PC-9 (cell line): ENCODE measurements at regions of chr2 and their contacts with region 1.

Region 1: DNA sequence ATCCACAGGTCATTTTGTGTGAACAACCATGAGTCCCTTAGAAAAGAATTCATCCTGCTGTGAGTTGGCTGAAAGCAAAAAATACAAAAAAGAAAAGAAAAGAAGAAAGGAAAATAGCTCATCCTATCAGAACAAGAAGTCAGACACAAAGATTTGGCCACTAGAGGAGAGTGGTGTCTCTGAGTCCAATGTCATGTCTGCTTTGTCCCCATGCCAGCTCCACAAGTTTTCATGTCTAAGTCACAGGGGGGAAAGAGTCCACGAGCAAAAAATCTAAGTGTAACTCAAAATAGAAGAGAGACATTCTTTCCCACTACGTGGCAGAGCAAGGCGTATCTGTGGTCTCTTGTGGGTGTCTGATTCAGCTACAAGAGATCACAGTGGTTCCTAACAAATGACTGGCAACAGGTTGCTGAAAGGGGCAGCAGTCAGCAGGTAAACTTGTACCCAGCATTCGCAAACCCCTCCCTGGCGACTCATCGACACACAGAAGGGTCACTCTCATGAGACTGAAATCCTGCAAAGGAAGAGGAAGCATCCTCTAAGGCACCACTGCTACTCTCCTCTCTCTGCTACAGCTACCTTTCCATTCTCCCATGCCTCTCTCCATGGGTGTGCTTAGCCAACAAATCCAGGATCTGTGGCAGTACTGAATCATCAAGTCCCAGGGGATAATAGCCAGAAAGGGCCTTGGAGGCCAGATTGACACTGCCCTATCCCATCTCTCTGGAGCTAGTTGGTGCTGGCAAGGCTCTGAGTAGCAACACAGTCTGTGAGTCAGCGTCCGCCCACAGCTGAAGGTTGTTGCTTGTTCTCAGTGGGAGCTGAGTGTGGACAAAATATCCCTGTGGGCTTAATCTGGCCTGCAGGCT is 123.0 kb upstream of the SLC39A10 start:
- DNase-seq: peak; percentile 47 to 61
- H3K4me3 ChIP-seq: no peak overlapping the region
- H3K27ac ChIP-seq: no peak overlapping the region
- H3K4me1 ChIP-seq: no peaks in the 10 kb centered on the region
- H3K27me3 ChIP-seq: no peaks in the 10 kb centered on the region
- CTCF ChIP-seq: no peak

Region 2: GRCh38 chr2:195382186-195382585 is 151.8 kb before region 1 on chr2:
- CTCF ChIA-PET with region 1: no interaction called
- POLR2A ChIA-PET with region 1: no interaction called
- intact Hi-C with region 1: no loop called
- DNase-seq: no peak
- H3K4me3 ChIP-seq: no peak overlapping the region
- H3K27ac ChIP-seq: no peak overlapping the region
- H3K4me1 ChIP-seq: no peaks in the 10 kb centered on the region
- H3K27me3 ChIP-seq: no peaks in the 10 kb centered on the region
- CTCF ChIP-seq: no peak

Region 3: GRCh38 chr2:195612611-195613495 is 78.8 kb after region 1 on chr2:
- CTCF ChIA-PET with region 1: no interaction called
- POLR2A ChIA-PET with region 1: interaction called, 9 read pairs
- intact Hi-C with region 1: loop called (anchors 5 kb)
- DNase-seq: peak; percentile 57 to 80
- H3K4me3 ChIP-seq: peak overlapping the region; percentile 45
- H3K27ac ChIP-seq: peak overlapping the region; percentile 57
- H3K4me1 ChIP-seq: peaks cover 24% of the 10 kb centered on the region
- H3K27me3 ChIP-seq: no peaks in the 10 kb centered on the region
- CTCF ChIP-seq: no peak

Region 4: GRCh38 chr2:195622956-195623355 is 88.9 kb after region 1 on chr2:
- CTCF ChIA-PET with region 1: no interaction called
- POLR2A ChIA-PET with region 1: interaction called, 26 read pairs
- intact Hi-C with region 1: no loop called
- DNase-seq: peak in 1 of 2 experiments; percentile 69
- H3K4me3 ChIP-seq: no peak overlapping the region
- H3K27ac ChIP-seq: no peak overlapping the region
- H3K4me1 ChIP-seq: no peaks in the 10 kb centered on the region
- H3K27me3 ChIP-seq: no peaks in the 10 kb centered on the region
- CTCF ChIP-seq: no peak